Activated CD4-positive, alpha-beta T cell treated with anti-CD3 and anti-CD28 coated beads for 36 hours (primary cell): ENCODE measurements at regions of chr1 and their contacts with region 1.

Region 1: DNA sequence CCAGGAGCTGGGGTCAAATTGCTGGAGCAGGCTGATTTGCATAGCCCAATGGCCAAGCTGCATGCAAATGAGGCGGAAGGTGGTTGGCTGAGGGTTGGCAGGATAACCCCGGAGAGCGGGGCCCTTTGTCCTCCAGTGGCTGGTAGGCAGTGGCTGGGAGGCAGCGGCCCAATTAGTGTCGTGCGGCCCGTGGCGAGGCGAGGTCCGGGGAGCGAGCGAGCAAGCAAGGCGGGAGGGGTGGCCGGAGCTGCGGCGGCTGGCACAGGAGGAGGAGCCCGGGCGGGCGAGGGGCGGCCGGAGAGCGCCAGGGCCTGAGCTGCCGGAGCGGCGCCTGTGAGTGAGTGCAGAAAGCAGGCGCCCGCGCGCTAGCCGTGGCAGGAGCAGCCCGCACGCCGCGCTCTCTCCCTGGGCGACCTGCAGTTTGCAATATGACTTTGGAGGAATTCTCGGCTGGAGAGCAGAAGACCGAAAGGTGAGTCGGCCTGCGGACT is at the start of gene GADD45A:
- DNase-seq: peak; percentile 97
- ATAC-seq: peak; percentile 83
- H3K4me3 Mint-ChIP-seq: peak within 1 kb of the TSS; percentile 81
- H3K27ac Mint-ChIP-seq: peak within 1 kb of the TSS; percentile 88
- H3K4me1 Mint-ChIP-seq: peaks cover 49% of the 10 kb centered on the region
- H3K27me3 Mint-ChIP-seq: no peaks in the 10 kb centered on the region
- total RNA-seq, gene GADD45A: 20.5 to 26.7 TPM

Region 2: GRCh38 chr1:66282343-66282852 is 1402.7 kb before region 1 on chr1:
- CTCF ChIA-PET with region 1: no interaction called
- POLR2A ChIA-PET with region 1: no interaction called
- intact Hi-C with region 1: loop called in 1 of 2 experiments (anchors 2 kb)
- DNase-seq: peak; percentile 82
- ATAC-seq: peak; percentile 80
- H3K4me3 Mint-ChIP-seq: peak overlapping the region; percentile 29
- H3K27ac Mint-ChIP-seq: peak overlapping the region; percentile 90
- H3K4me1 Mint-ChIP-seq: peaks cover 93% of the 10 kb centered on the region
- H3K27me3 Mint-ChIP-seq: no peaks in the 10 kb centered on the region

Region 3: GRCh38 chr1:67053785-67054772 is 631.0 kb before region 1 on chr1 and contains the start of gene SLC35D1:
- CTCF ChIA-PET with region 1: no interaction called
- POLR2A ChIA-PET with region 1: no interaction called
- intact Hi-C with region 1: loop called in 1 of 2 experiments (anchors 2 kb)
- DNase-seq: peak; percentile 77
- ATAC-seq: peak; percentile 79
- H3K4me3 Mint-ChIP-seq: peak within 1 kb of the TSS; percentile 79
- H3K27ac Mint-ChIP-seq: peak within 1 kb of the TSS; percentile 91
- H3K4me1 Mint-ChIP-seq: peaks cover 26% of the 10 kb centered on the region
- H3K27me3 Mint-ChIP-seq: peaks cover 5% of the 10 kb centered on the region
- total RNA-seq, gene SLC35D1: 8.7 to 10.3 TPM

Region 4: DNA sequence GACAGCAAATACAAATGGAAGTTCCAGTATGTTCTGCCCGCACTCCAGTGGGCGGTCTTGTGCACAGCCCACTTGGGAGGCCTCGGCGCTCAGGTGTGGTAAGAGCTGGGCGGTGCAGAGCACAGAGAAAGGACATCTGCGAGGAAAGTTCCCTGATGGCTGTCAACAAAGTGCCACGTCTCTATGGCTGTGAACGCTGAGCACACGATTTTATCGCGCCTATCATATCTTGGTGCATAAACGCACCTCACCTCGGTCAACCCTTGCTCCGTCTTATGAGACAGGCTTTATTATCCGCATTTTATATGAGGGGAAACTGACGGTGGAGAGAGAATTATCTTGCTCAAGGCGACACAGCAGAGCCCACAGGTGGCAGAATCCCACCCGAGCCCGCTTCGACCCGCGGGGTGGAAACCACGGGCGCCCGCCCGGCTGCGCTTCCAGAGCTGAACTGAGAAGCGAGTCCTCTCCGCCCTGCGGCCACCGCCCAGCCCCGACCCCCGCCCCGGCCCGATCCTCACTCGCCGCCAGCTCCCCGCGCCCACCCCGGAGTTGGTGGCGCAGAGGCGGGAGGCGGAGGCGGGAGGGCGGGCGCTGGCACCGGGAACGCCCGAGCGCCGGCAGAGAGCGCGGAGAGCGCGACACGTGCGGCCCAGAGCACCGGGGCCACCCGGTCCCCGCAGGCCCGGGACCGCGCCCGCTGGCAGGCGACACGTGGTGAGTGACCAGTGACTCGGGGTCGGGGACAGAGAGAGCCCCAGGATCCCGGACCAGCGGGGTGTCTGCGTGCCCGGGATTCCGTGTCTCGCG is 377.7 kb before region 1 on chr1 and contains the start of gene IL12RB2:
- CTCF ChIA-PET with region 1: no interaction called
- POLR2A ChIA-PET with region 1: no interaction called
- intact Hi-C with region 1: loop called in 1 of 2 experiments (anchors 10 kb)
- DNase-seq: peak; percentile 77
- ATAC-seq: peak; percentile 77
- H3K4me3 Mint-ChIP-seq: peak within 1 kb of the TSS; percentile 83
- H3K27ac Mint-ChIP-seq: peak within 1 kb of the TSS; percentile 90
- H3K4me1 Mint-ChIP-seq: peaks cover 48% of the 10 kb centered on the region
- H3K27me3 Mint-ChIP-seq: no peaks in the 10 kb centered on the region
- total RNA-seq, gene IL12RB2: 77.9 to 99.2 TPM

Region 5: DNA sequence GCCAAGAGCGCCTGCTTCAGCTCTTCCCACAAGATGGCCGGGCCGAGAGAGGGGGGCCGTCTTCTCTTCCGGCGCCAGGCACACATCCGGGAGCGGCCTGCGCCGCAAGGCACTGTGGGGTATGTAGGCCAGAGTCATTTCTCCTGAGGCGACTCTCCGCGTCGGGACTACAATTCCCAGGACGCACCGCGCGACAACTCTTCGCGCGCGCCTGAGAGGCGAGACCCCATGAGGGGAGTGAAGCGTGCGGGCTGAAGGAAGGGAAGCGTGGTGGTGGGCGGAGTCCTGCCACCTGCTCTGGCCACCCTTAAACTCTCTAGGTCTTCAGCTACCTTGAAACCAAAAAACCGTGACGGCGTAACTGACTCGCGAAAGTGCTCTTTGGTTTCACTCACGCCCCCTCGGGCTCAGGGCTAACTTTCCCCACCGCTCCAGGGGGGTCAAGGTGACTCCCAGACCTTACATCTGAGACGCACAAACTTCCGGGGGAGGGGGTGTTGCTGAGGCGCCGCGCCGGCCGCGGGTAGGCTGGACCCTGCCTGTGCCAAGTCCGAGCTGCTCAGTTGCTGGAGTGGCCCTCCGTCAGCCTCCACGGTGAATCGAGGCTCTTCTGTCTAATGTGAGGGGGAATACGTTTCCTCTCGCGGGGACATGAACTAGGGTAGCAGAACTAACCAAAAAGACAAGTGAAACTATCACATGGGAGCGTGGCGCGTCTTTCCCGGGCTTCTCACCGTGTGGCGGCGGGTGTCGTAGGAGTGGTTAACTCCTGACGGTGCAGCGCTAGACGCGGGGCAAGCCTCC is 254.6 kb before region 1 on chr1 and contains the start of gene SERBP1:
- CTCF ChIA-PET with region 1: no interaction called
- POLR2A ChIA-PET with region 1: interaction called, 6 read pairs
- intact Hi-C with region 1: loop called (anchors 1 kb)
- DNase-seq: peak; percentile 97
- ATAC-seq: peak; percentile 91
- H3K4me3 Mint-ChIP-seq: peak within 1 kb of the TSS; percentile 97
- H3K27ac Mint-ChIP-seq: peak within 1 kb of the TSS; percentile 100
- H3K4me1 Mint-ChIP-seq: peaks cover 48% of the 10 kb centered on the region
- H3K27me3 Mint-ChIP-seq: no peaks in the 10 kb centered on the region
- total RNA-seq, gene SERBP1: 433 to 510 TPM

Region 6: DNA sequence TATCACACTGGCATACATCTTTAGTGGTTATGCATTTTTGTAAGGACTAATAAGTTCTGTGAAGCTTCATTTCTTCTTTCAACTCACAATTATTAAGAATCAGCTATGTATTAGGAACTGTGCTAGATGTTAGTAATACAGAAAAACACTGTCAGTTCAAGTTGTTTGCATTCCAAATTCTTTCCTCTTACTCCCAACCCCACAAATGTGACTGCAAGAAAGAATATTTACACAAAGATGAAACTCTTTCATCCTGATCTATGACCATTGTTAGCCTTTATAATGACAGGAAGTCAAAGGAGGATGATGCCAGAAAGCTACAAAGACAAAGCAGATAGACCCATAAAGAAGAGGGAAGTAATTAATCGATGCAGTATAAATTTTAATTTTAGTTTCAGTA is 21.1 kb before region 1 on chr1:
- CTCF ChIA-PET with region 1: no interaction called
- POLR2A ChIA-PET with region 1: no interaction called
- intact Hi-C with region 1: no loop called
- DNase-seq: no peak
- ATAC-seq: no peak
- H3K4me3 Mint-ChIP-seq: no peak overlapping the region
- H3K27ac Mint-ChIP-seq: no peak overlapping the region
- H3K4me1 Mint-ChIP-seq: no peaks in the 10 kb centered on the region
- H3K27me3 Mint-ChIP-seq: peaks cover 16% of the 10 kb centered on the region

Region 7: DNA sequence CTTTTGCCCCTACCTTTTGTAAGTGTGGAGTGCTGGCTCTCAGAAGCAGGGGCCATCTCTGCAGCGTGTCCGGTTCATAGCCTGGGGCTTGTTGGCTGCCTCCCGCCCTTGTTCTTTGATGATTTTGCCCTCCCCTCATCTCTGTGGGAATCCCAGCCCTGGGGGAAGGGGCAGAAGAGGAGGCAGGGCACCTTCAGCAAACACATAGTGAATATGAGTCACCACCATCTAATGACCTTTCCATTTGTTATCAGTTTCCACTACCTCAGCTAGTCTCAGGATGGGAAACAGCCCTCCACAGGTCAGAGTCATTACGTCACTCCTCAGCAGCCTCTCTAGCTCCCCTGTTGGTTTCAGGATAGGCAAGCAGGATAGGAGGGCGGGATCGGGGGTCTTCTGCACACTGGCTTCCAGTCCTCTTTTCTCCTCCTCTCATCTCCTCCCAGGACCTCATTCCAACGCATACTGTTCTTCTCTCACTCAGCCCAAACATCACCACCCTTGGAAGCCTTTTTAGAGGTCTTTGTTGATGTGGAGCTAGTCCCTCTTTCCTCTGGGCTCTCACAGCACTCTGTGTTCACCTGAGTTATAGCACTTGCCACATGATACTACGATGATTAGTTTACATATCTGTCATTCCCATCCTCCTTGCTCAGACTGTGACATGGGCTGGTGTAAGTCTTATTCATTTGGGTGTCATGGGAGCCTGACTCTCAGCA is 15.7 kb after region 1 on chr1:
- CTCF ChIA-PET with region 1: interaction called, 3 read pairs
- POLR2A ChIA-PET with region 1: interaction called, 8 read pairs
- intact Hi-C with region 1: loop called in 1 of 2 experiments (anchors 1 kb)
- DNase-seq: peak; percentile 44
- ATAC-seq: peak; percentile 93
- H3K4me3 Mint-ChIP-seq: no peak overlapping the region
- H3K27ac Mint-ChIP-seq: peak overlapping the region; percentile 22
- H3K4me1 Mint-ChIP-seq: peaks cover 12% of the 10 kb centered on the region
- H3K27me3 Mint-ChIP-seq: no peaks in the 10 kb centered on the region

Region 8: GRCh38 chr1:67760030-67760821 is 75.1 kb after region 1 on chr1:
- CTCF ChIA-PET with region 1: interaction called, 27 read pairs
- POLR2A ChIA-PET with region 1: no interaction called
- intact Hi-C with region 1: loop called (anchors 1 to 2 kb)
- DNase-seq: peak; percentile 76
- ATAC-seq: peak; percentile 58
- H3K4me3 Mint-ChIP-seq: no peak overlapping the region
- H3K27ac Mint-ChIP-seq: no peak overlapping the region
- H3K4me1 Mint-ChIP-seq: no peaks in the 10 kb centered on the region
- H3K27me3 Mint-ChIP-seq: peaks cover 13% of the 10 kb centered on the region